ENCODE measurements at regions of chr5 and their contacts with region 1.

Region 1: GRCh38 chr5:90932052-90932699 is 373.6 kb downstream of the ADGRV1 start:
- DNase-seq: no peak

Region 2: DNA sequence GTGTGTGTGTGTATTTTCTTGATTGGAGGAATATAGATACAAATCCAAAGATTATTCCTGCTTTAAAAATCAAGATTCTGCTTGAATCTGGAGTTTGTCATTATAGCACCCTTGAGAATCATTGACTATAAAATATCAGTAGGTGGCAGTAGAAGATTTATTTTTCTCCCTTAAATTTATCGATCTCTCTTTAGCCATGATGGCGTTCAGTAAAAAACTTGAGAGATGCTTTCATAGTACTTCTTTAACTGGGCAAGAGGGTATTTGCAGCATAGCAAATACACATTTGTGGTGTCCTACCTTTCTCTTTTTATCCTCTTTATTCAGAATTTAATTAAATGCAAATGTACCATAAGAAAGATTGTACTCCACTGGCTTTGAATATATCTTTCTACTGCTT is 65.8 kb before region 1 on chr5:
- intact Hi-C with region 1: loop called (anchors 5 kb)
- DNase-seq: no peak

Region 3: DNA sequence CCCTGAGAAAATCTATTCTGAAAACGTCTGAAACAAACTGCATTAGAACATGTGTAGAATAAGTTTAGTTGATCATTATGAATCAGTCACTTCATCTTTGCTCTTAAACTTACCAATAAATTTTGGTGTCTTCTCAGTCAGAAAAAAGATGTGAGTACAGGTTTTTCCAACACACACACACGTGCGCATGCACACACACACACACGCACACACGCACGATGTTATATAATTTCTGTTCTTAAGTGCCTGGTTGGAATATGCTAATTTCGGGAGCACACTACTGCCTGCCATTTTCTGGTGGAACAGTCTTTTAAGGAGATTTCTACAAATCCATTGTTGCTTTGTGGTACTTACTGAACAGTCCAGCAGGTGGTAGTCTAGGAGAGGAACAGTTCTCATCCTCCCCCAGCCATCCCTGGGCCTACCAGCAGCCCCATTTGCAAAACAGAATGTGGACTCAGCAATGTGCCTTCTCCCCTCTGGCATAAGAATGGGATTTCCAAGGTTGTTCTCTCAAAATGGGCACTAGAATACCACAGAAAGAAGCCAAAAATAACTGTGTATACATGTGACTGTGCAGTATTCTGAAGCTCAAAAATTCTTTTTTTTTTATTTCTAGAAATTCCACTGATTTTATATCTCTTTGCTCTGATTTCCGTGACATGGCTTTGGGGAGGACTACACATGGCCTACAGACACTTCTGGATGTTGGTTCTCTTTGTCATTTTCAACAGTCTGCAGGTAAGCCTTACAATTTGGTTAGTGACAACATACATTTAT is 169.6 kb after region 1 on chr5:
- intact Hi-C with region 1: loop called (anchors 2 kb)
- DNase-seq: peak; percentile 82

Region 4: DNA sequence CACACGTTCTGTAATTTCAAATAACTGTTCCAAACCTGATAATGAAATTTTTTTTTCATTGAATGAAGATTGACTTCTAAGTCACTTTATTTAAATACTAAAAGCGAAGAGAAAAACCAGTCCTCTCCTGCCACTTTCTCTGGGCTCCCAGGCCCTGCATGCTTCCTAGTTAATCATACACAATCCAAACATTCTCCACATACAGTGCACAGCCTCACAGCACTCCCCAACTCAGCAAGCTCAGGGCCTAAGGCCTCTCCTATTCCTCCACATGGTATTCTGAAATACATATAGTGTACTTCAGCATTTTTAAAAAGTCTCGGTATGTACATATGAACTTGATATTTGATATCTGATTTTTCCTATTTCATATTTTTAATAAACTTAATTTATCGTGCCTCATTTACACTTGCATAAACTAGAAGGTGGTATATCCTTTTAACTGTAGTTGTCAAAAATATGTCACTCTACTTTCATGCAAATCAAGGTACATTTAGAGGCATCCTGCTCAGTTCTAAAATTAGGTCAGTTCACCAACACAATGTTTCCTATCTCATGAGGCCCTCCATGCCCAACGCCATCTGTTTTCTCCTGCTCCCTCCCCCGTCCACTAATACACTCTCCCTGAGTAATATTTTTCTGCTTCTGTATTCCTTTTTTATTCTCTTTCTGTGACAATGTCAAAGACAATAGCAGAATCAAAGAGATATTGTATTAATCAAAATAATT is 244.3 kb after region 1 on chr5:
- intact Hi-C with region 1: no loop called
- DNase-seq: no peak

Region 5: DNA sequence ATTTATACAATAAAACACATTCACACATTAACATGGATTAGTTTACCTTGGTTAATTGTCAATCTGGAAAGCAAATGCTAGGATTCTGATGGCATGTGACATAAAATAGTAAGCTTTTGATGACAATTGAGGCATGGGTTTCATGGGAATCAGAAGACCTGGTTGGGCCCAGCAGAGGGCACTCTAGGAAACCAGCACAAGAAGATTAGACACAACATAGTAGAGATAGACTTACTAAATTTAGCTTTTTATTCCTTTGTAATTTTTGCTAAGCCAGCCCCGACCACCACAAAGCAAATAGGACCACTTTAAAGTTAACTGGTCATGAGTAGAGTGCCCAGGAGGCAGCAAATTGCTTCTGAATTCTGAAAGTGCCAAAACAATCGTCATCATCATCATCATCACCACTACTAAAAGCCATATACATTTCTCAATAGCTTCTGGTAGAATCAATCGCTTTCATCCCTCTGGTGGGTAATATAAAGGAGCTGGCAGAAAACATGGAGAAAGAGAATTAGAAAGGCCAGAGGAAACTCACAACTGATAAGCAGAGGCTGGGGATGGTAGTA is 287.7 kb after region 1 on chr5:
- intact Hi-C with region 1: loop called (anchors 10 kb)
- DNase-seq: no peak

Region 6: DNA sequence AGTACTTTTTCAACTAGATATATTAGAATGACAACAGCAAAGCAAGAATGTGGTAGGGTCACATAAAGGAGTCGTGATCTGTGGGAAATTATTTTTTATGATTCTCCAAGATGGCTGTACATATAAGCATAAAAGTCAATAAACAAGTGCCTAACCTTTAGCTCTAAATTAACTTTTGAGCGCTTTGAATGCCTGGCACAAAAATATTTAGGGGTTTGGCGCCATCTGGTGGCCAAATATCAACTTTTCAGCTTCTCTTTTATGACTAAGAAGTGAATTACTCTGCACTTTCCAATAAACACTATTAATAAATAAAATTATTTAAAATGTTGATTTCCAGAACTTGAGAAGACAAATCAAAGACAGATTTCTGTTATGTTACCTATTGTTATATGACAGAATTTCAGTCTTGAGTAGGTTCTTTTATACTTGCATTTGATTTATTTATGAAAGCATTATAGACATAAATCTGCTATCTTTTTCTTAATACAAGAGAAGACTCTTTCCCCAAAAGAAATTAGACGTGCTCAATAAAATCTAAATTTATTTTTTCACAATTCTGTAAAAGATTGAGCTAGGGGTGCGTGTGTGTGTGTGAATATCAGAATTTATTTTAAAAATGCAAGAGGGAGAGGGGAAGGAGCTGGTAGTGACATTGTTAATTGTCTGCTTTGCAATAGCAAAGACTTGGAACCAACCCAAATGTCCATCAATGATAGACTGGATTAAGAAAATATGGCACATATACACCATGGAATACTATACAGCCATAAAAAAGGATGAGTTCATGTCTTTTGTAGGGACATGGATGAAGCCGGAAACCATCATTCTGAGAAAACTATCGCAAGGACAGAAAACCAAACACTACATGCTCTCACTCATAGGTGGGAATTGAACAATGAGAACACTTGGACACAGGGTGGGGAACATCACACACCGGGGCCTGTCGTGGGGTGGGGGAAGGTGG is 487.7 kb after region 1 on chr5:
- intact Hi-C with region 1: loop called (anchors 10 kb)
- DNase-seq: no peak

Measured in cardiac septum (tissue), 1 donor.